PC-3 (cell line): ENCODE measurements at regions of chr17 and their contacts with region 1.

Region 1: GRCh38 chr17:37239690-37240334 is 136.0 kb upstream of the C17orf78 start:
- DNase-seq: peak; percentile 38
- ATAC-seq: no peak
- H3K4me3 ChIP-seq: no peak overlapping the region
- H3K27ac ChIP-seq: no peak overlapping the region
- H3K4me1 ChIP-seq: no peaks in the 10 kb centered on the region
- H3K27me3 ChIP-seq: no peaks in the 10 kb centered on the region
- CTCF ChIP-seq: peak; percentile 70

Region 2: DNA sequence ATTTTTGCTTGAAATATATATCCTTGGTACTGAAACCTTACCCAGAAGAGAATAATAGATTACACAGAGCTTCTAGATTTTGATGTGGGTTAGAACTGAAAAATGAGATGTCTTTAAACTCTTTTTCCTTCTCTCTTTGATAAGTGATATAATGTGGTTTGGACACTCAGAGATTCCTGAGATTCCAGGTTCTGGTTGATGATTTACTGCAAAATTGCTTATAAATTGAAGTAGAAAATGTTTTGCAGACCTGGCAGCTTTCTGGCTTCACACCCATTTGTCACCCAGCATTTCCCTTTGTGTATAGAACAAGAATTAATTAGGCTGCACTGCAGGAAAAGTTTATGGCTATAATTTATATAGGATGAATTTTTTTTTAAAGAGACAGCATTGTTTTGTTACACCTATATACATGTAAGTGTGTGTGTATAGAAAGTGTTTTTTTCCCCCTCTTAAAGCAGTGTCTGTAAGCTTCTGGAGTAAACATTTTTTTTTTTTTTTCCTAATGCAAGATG is 267.6 kb before region 1 on chr17:
- CTCF ChIA-PET with region 1: no interaction called
- POLR2A ChIA-PET with region 1: no interaction called
- intact Hi-C with region 1: loop called (anchors 10 kb)
- DNase-seq: no peak
- ATAC-seq: no peak
- H3K4me3 ChIP-seq: no peak overlapping the region
- H3K27ac ChIP-seq: no peak overlapping the region
- H3K4me1 ChIP-seq: no peaks in the 10 kb centered on the region
- H3K27me3 ChIP-seq: peaks cover 8% of the 10 kb centered on the region; the same call in 1 of the 2 replicates
- CTCF ChIP-seq: no peak

Region 3: DNA sequence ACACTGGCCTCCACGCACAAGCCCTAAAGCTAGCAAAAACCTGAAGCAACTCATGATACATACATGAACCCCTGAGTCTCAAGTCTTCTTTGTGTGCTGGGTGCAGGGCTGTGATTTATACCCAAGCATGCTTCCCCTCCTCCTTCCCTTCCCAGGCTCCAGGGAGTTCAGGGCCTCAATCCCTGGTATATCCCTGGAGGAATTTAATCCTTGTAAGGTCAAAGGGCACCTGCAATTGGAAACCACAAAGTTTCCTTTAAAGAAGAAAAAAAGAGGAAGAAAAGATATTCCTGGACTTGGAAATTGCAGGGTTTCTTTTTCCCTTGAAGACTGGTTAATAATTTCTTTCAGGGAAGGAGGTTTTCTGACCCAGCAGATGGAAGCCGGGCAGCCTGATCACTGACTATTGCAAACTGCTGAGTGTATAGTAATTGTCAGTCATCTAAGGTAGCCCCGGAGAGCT is 108.8 kb before region 1 on chr17:
- CTCF ChIA-PET with region 1: no interaction called
- POLR2A ChIA-PET with region 1: no interaction called
- intact Hi-C with region 1: no loop called
- DNase-seq: no peak
- ATAC-seq: no peak
- H3K4me3 ChIP-seq: no peak overlapping the region
- H3K27ac ChIP-seq: no peak overlapping the region
- H3K4me1 ChIP-seq: no peaks in the 10 kb centered on the region
- H3K27me3 ChIP-seq: no peaks in the 10 kb centered on the region
- CTCF ChIP-seq: no peak

Region 4: GRCh38 chr17:37179893-37180292 is 59.9 kb before region 1 on chr17:
- CTCF ChIA-PET with region 1: interaction called, 13 read pairs
- POLR2A ChIA-PET with region 1: no interaction called
- intact Hi-C with region 1: no loop called
- DNase-seq: peak; percentile 74
- ATAC-seq: peak; percentile 88
- H3K4me3 ChIP-seq: no peak overlapping the region
- H3K27ac ChIP-seq: peak overlapping the region; percentile 71
- H3K4me1 ChIP-seq: peaks cover 33% of the 10 kb centered on the region
- H3K27me3 ChIP-seq: no peaks in the 10 kb centered on the region
- CTCF ChIP-seq: no peak